ENCODE measurements at regions of chr1 and their contacts with region 1.

Region 1: DNA sequence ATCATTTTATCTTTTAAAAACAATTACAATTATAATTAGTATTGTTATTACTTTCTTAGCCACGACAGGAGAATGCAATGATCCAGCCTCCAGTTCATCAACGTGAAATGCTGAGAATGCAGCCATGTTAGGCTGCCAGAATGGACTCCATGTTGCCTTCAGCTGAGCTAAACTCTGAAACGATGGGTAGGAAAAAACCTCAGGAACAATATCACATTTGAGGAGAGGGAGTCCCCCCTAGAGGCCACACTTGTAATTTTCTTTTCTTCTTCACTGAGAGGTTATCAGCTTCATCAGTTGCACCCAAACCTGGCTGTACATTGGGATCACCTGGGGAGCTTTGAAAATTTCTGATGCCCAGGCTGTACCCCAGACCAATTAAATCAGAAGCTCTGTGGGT is 34.6 kb upstream of the DNAH14 start:
- DNase-seq: no peak
- ATAC-seq: peak; percentile 96
- H3K4me3 Mint-ChIP-seq: no peak overlapping the region
- H3K27ac Mint-ChIP-seq: no peak overlapping the region
- H3K4me1 Mint-ChIP-seq: no peaks in the 10 kb centered on the region
- H3K27me3 Mint-ChIP-seq: no peaks in the 10 kb centered on the region; the same call in 1 of the 2 replicates
- CTCF ChIP-seq: peak; percentile 46

Region 2: GRCh38 chr1:224513787-224514209 is 381.1 kb before region 1 on chr1:
- CTCF ChIA-PET with region 1: interaction called, 13 read pairs
- POLR2A ChIA-PET with region 1: interaction called, 6 read pairs
- DNase-seq: peak; percentile 95
- ATAC-seq: peak; percentile 93
- H3K4me3 Mint-ChIP-seq: no peak overlapping the region
- H3K27ac Mint-ChIP-seq: peak overlapping the region; percentile 26; the same call in 1 of the 2 replicates
- H3K4me1 Mint-ChIP-seq: peaks cover 15% of the 10 kb centered on the region
- H3K27me3 Mint-ChIP-seq: no peaks in the 10 kb centered on the region; the same call in 1 of the 2 replicates
- CTCF ChIP-seq: peak; percentile 86

Region 3: GRCh38 chr1:224644553-224645154 is 250.3 kb before region 1 on chr1:
- CTCF ChIA-PET with region 1: interaction called, 10 read pairs
- POLR2A ChIA-PET with region 1: no interaction called
- DNase-seq: peak; percentile 73
- ATAC-seq: peak; percentile 72
- H3K4me3 Mint-ChIP-seq: no peak overlapping the region
- H3K27ac Mint-ChIP-seq: no peak overlapping the region
- H3K4me1 Mint-ChIP-seq: peaks cover 24% of the 10 kb centered on the region
- H3K27me3 Mint-ChIP-seq: no peaks in the 10 kb centered on the region
- CTCF ChIP-seq: peak; percentile 93

Region 4: DNA sequence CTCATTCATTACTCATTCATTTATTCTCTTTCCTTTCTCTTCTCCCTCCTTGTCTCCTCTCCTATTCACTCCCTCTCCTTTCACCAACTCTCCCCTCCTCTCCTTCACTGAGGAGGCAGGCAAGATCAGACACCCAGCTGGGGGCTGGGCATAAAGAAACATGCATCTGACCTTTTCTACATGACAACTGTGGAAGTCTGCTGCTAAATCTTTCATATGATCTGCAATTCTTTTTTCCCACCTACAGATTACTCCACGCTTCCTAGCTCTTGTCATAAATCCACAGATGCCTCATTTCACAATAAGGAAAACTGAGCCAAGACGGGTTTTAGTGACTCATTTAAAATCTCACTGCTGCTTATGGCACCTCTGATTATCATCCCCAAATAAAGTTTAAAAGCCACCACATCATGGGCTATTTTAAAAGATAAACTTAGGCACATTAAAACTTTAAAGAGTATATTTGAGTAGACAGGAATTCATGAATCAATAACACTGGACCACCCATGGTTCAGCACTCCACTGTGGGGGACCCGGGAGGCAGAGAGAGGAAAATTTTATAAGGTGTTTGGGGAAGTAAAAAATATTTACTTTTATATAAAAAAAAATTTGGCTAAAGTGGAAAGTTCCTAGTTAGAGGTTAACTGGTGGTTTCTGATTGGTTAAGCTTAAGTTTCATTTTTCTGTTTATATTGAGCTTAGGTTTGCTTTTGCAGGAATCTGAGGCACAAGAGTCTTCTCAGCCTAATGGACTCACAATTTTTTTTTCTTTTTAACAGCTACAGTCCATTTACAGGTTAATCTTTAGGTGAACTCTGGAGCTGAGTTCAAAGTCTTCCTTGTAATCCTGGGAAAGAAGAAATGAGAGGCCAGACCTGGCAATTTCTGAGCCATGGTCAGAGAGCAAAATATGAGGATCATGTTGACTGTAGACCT is 21.2 kb before region 1 on chr1:
- CTCF ChIA-PET with region 1: interaction called, 29 read pairs
- POLR2A ChIA-PET with region 1: no interaction called
- DNase-seq: no peak
- ATAC-seq: peak; percentile 70
- H3K4me3 Mint-ChIP-seq: no peak overlapping the region
- H3K27ac Mint-ChIP-seq: no peak overlapping the region
- H3K4me1 Mint-ChIP-seq: peaks cover 20% of the 10 kb centered on the region
- H3K27me3 Mint-ChIP-seq: no peaks in the 10 kb centered on the region; the same call in 1 of the 2 replicates
- CTCF ChIP-seq: no peak

Region 5: DNA sequence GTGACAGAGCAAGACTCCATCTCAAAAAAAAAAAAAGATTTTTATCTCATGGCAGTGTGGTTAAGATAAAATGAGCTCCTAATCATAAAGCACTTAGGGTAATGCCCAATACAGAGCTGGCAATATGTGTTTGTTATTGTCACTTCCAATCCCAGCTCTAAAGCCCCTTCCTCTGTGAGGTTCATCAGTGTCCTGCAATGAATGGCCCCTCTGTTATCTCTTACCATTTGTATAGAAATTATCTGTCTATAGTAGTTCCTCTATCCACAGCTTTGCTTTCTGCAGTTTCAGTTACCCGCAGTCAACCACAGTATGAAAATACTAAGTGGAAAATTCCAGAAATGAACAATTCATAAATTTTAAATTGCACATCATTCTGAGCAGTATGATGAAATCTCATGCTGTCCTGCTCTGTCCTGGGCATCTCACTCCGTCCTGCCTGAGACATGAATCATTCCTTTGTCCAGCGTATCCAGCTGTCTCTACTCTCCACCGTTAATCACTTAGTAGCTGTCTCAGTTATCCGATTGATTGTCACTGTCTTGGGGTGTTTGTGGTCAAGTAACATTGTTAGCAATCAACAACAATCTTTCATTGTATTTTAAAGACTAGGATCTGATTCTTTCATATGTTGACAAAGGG is 15.6 kb before region 1 on chr1:
- CTCF ChIA-PET with region 1: interaction called, 29 read pairs
- POLR2A ChIA-PET with region 1: no interaction called
- DNase-seq: no peak
- ATAC-seq: no peak
- H3K4me3 Mint-ChIP-seq: no peak overlapping the region
- H3K27ac Mint-ChIP-seq: no peak overlapping the region
- H3K4me1 Mint-ChIP-seq: peaks cover 64% of the 10 kb centered on the region
- H3K27me3 Mint-ChIP-seq: no peaks in the 10 kb centered on the region; the same call in 1 of the 2 replicates
- CTCF ChIP-seq: no peak

Region 6: GRCh38 chr1:224884361-224884801 is 10.5 kb before region 1 on chr1:
- CTCF ChIA-PET with region 1: interaction called, 18 read pairs
- POLR2A ChIA-PET with region 1: no interaction called
- DNase-seq: no peak
- ATAC-seq: peak; percentile 47
- H3K4me3 Mint-ChIP-seq: no peak overlapping the region
- H3K27ac Mint-ChIP-seq: 0 out of 2 replicates have a peak overlapping the region, but pooled peaks have one; percentile 5
- H3K4me1 Mint-ChIP-seq: peaks cover 50% of the 10 kb centered on the region
- H3K27me3 Mint-ChIP-seq: peaks cover 12% of the 10 kb centered on the region
- CTCF ChIP-seq: no peak

Region 7: DNA sequence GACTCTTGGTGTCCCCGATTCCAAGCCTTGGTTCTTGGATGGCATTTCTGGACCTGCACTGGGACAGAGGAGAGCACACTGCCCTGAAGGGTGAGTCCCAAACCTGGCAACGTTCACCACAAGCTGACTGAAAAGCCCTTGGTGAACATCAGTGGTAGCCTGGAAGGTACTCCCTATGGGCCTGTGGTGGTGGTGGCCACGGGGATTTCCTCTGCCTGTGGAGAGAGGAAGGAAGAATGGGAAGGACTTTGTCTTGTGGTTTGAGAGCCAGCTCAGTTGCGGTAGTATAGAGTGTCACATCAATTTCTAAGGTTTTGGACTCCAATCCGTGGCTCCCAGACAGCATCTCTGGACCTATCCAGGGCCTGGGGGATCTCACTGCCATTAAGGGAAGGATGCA is 85.3 kb after region 1 on chr1:
- CTCF ChIA-PET with region 1: no interaction called
- POLR2A ChIA-PET with region 1: no interaction called
- DNase-seq: no peak
- ATAC-seq: no peak
- H3K4me3 Mint-ChIP-seq: no peak overlapping the region
- H3K27ac Mint-ChIP-seq: no peak overlapping the region
- H3K4me1 Mint-ChIP-seq: 0 out of 2 replicates have a peak, but pooled peaks cover 3% of the 10 kb centered on the region
- H3K27me3 Mint-ChIP-seq: peaks cover 100% of the 10 kb centered on the region
- CTCF ChIP-seq: no peak

Measured in WTC11 (cell line).